ENCODE measurements at regions of chr14 and their contacts with region 1.

Region 1: GRCh38 chr14:99266181-99267178 is 5.5 kb downstream of the BCL11B start:
- DNase-seq: peak; percentile 93
- ATAC-seq: peak; percentile 46
- H3K4me3 Mint-ChIP-seq: peak overlapping the region; percentile 96
- H3K27ac Mint-ChIP-seq: peak overlapping the region; percentile 98
- H3K4me1 Mint-ChIP-seq: peaks cover 58% of the 10 kb centered on the region
- H3K27me3 Mint-ChIP-seq: peaks cover 2% of the 10 kb centered on the region

Region 2: DNA sequence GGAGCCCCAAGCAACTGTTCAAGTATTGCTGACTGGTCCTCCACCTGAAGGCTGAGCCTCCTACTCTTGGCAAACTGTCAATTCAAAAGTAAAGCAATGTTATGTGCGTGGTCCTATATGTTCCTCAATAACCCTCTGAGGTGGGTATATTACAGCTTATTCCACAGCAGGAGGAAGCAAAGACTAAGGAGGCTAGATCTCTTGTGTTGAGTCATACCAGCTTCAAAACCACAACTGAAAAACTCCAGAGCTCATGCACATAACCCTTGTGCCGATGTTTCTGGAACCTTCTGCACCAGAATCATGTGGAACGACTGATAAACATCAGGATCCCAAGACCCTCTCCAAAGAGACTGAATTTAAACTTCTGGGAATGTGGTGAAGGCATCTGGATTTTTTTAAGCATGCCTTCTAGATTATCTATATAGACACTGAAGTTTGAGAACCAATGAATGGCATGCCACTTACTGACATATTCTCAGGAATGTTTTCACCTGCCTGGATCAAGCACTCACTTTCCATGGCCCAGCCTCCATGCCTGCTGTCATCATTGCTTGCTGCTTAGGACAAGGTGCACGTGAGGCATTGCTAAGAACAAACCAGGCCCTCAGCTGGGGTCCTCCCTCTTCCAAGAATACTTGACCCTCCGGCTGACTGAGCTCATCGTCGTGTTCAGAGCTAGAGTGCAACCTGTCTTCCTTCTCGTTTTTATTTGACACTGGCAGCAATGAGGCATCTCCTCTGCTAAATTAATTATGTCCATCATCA is 189.2 kb before region 1 on chr14:
- CTCF ChIA-PET with region 1: no interaction called
- DNase-seq: peak; percentile 37
- ATAC-seq: peak; percentile 73
- H3K4me3 Mint-ChIP-seq: no peak overlapping the region
- H3K27ac Mint-ChIP-seq: no peak overlapping the region
- H3K4me1 Mint-ChIP-seq: peaks cover 26% of the 10 kb centered on the region
- H3K27me3 Mint-ChIP-seq: no peaks in the 10 kb centered on the region

Region 3: GRCh38 chr14:99155173-99156089 is 111.0 kb before region 1 on chr14:
- CTCF ChIA-PET with region 1: no interaction called
- DNase-seq: no peak
- ATAC-seq: no peak
- H3K4me3 Mint-ChIP-seq: no peak overlapping the region
- H3K27ac Mint-ChIP-seq: no peak overlapping the region
- H3K4me1 Mint-ChIP-seq: peaks cover 8% of the 10 kb centered on the region
- H3K27me3 Mint-ChIP-seq: peaks cover 2% of the 10 kb centered on the region

Region 4: GRCh38 chr14:99188731-99189191 is 77.7 kb before region 1 on chr14:
- CTCF ChIA-PET with region 1: interaction called, 58 read pairs
- DNase-seq: peak; percentile 71
- ATAC-seq: peak; percentile 38
- H3K4me3 Mint-ChIP-seq: peak overlapping the region; percentile 71
- H3K27ac Mint-ChIP-seq: peak overlapping the region; percentile 94
- H3K4me1 Mint-ChIP-seq: peaks cover 88% of the 10 kb centered on the region
- H3K27me3 Mint-ChIP-seq: no peaks in the 10 kb centered on the region

Region 5: DNA sequence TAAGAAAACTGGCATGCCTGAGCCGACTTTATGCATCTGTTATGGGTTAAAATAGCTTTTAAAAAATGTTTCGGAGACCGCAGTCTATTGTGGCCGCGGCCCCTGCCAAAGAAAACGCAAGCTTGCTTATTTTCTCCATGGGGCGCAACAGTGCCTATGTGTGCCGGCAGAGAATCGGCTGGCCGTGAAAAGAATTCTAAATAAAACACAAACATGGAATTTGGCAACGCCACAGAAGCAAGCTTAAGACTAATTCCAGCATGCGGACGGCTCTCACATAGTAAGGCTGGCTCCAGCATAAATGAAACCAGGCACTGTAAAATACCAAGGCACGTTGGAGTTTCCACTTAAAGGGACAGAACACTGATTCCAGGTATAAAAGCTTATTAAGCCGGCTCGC is 51.2 kb before region 1 on chr14:
- CTCF ChIA-PET with region 1: interaction called, 10 read pairs
- DNase-seq: no peak
- ATAC-seq: no peak
- H3K4me3 Mint-ChIP-seq: peak overlapping the region; percentile 3
- H3K27ac Mint-ChIP-seq: peak overlapping the region; percentile 47
- H3K4me1 Mint-ChIP-seq: peaks cover 90% of the 10 kb centered on the region
- H3K27me3 Mint-ChIP-seq: no peaks in the 10 kb centered on the region

Region 6: GRCh38 chr14:99245564-99246511 is 20.6 kb before region 1 on chr14:
- CTCF ChIA-PET with region 1: interaction called, 395 read pairs
- DNase-seq: no peak
- ATAC-seq: no peak
- H3K4me3 Mint-ChIP-seq: peak overlapping the region; percentile 73
- H3K27ac Mint-ChIP-seq: peak overlapping the region; percentile 91
- H3K4me1 Mint-ChIP-seq: peaks cover 82% of the 10 kb centered on the region
- H3K27me3 Mint-ChIP-seq: no peaks in the 10 kb centered on the region

Region 7: DNA sequence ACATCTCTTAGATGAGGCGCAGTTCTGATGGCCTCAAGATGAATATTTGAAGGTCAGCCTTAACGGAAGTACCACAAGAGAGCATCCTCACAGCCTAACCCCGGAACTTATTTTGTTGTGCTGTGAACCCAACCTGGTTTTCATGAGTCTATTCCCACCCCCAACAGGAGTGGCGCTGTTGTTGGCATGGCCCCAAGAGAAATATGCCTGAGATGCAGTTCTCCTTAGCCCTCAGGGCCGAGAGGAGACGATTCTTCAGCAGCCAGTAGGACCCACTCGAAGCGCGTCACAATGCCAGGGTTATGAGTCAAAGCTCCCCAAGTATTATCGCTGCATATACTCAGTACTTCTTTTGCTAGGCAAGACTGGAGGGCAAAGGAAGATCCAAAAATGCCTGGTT is 30.0 kb after region 1 on chr14:
- CTCF ChIA-PET with region 1: no interaction called
- DNase-seq: no peak
- ATAC-seq: no peak
- H3K4me3 Mint-ChIP-seq: no peak overlapping the region
- H3K27ac Mint-ChIP-seq: no peak overlapping the region
- H3K4me1 Mint-ChIP-seq: no peaks in the 10 kb centered on the region
- H3K27me3 Mint-ChIP-seq: peaks cover 45% of the 10 kb centered on the region